Dendritic cell treated with granulocyte-macrophage colony-stimulating factor and Interleukin-4, amounts not matched to agents 40 ng/mL and 50 ng/mL, for 4 days (primary cell): ENCODE measurements at regions of chr2 and their contacts with region 1.

Region 1: GRCh38 chr2:144659731-144660275 is 139.9 kb upstream of the ZEB2 start:
- H3K4me3 Mint-ChIP-seq: peak overlapping the region; percentile 37
- H3K27ac Mint-ChIP-seq: peak overlapping the region; percentile 95
- H3K4me1 Mint-ChIP-seq: peaks cover 61% of the 10 kb centered on the region
- H3K27me3 Mint-ChIP-seq: no peaks in the 10 kb centered on the region

Region 2: GRCh38 chr2:144630459-144631215 is 29.2 kb before region 1 on chr2:
- intact Hi-C with region 1: no loop called
- H3K4me3 Mint-ChIP-seq: no peak overlapping the region
- H3K27ac Mint-ChIP-seq: no peak overlapping the region
- H3K4me1 Mint-ChIP-seq: peaks cover 34% of the 10 kb centered on the region
- H3K27me3 Mint-ChIP-seq: no peaks in the 10 kb centered on the region

Region 3: DNA sequence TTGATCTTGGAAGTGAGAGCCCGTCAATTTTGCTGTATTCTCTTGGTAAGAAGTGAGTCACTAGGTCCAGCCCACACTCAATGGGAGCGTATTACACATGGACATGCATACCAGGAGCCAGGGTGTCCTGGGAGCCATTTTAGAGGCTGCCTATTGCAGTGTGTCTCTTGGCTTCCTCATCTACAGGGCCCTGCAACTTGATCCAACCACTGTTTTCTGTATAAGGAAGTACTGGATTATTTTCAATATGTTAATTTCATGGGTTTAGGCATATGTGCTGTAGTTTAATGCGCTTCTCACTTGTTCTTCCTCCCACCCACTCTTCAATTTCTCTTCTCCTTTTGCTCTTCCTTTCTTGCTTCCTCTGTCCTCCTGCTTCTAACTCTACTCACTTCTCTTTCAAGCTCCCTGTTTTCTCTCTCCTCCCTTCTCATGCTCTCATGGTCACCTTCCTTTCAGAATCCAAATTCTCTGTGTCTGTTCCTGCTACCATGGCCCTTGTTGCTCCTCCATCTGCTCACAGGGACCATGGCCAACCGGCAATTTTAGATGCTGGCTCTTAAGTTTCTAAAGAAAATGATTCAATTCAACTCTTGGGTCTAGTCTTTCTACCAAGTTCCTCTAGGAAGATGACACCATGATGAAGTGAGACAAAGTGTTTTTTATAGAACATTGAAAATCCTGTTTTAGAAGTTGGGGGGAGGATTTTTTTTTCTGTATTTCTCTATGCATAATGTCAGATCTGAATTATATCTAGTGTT is 12.1 kb after region 1 on chr2:
- intact Hi-C with region 1: loop called (anchors 1 kb)
- H3K4me3 Mint-ChIP-seq: peak overlapping the region; percentile 59
- H3K27ac Mint-ChIP-seq: peak overlapping the region; percentile 90
- H3K4me1 Mint-ChIP-seq: peaks cover 63% of the 10 kb centered on the region
- H3K27me3 Mint-ChIP-seq: no peaks in the 10 kb centered on the region

Region 4: DNA sequence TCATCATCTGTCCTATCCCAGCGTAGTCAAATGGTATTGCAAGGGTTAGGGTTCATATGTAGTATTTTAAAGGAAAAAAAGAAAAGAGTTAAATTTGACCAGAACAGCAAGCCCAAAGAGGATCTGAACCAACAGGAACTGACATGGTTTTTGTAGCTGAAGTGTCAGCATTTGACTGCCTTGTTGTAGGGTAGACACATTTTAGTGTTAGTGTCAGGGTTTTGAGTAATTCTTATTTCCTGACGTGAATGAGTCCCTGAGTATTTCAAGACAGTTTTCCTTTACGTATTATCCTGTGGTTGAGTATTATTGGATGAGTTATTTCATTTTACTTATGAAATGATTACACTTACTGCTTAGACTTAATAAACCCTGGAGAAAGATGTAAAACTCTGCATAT is 33.4 kb after region 1 on chr2:
- intact Hi-C with region 1: loop called (anchors 2 kb)
- H3K4me3 Mint-ChIP-seq: no peak overlapping the region
- H3K27ac Mint-ChIP-seq: peak overlapping the region; percentile 95
- H3K4me1 Mint-ChIP-seq: peaks cover 30% of the 10 kb centered on the region
- H3K27me3 Mint-ChIP-seq: no peaks in the 10 kb centered on the region